Tibial artery (tissue), 4 donors: ENCODE measurements at regions of chr7 and their contacts with region 1.

Region 1: GRCh38 chr7:30740424-30741181 is 11.3 kb upstream of the INMT start:
- DNase-seq: peak; percentile 64 to 84
- H3K4me3 ChIP-seq: no peak overlapping the region
- H3K27ac ChIP-seq: no peak overlapping the region
- H3K4me1 ChIP-seq: peaks cover 0 to 8% (median 0%) of the 10 kb centered on the region in 4 donors
- H3K27me3 ChIP-seq: no peaks in the 10 kb centered on the region
- CTCF ChIP-seq: peak; percentile 93 to 99

Region 2: DNA sequence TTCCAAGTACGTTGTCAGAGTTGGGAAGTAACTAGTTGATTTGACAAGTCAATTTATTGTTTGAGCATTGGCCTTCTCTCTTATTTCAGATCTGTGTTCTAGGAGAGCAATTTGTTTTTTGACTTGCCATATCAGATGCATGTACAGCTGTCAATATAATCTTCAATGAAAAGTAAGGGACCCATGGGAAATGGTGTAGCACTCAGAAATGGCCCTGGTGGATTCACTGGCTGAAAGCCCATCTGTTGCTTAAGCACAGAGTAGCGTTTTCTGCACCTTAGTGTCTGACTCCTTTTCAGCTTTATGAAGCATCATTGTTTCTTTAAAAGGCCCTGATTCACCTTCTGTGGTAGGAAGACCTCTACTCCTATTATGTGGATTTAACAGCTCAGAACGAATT is 135.7 kb before region 1 on chr7:
- intact Hi-C with region 1: loop called (anchors 10 kb)
- DNase-seq: no peak
- H3K4me3 ChIP-seq: no peak overlapping the region
- H3K27ac ChIP-seq: no peak overlapping the region
- H3K4me1 ChIP-seq: no peaks in the 10 kb centered on the region
- H3K27me3 ChIP-seq: no peaks in the 10 kb centered on the region
- CTCF ChIP-seq: no peak

Region 3: GRCh38 chr7:30842542-30843451 is 102.2 kb after region 1 on chr7:
- intact Hi-C with region 1: no loop called
- DNase-seq: peak in 1 of 2 donors; percentile 68
- H3K4me3 ChIP-seq: no peak overlapping the region
- H3K27ac ChIP-seq: peak overlapping the region; percentile 83 to 93
- H3K4me1 ChIP-seq: peaks cover 13 to 53% (median 42%) of the 10 kb centered on the region in 4 donors
- H3K27me3 ChIP-seq: no peaks in the 10 kb centered on the region
- CTCF ChIP-seq: no peak

Region 4: GRCh38 chr7:30869794-30870611 is 129.4 kb after region 1 on chr7:
- intact Hi-C with region 1: no loop called
- DNase-seq: no peak
- H3K4me3 ChIP-seq: no peak overlapping the region
- H3K27ac ChIP-seq: peak overlapping the region in 1 of 2 donors; percentile 21
- H3K4me1 ChIP-seq: peaks cover 0 to 42% (median 11%) of the 10 kb centered on the region in 4 donors
- H3K27me3 ChIP-seq: no peaks in the 10 kb centered on the region
- CTCF ChIP-seq: no peak

Region 5: GRCh38 chr7:30983042-30983913 is 242.7 kb after region 1 on chr7:
- intact Hi-C with region 1: loop called (anchors 5 kb)
- DNase-seq: peak; percentile 77 to 88
- H3K4me3 ChIP-seq: peak overlapping the region; percentile 24 to 34
- H3K27ac ChIP-seq: peak overlapping the region in 1 of 2 donors; percentile 49
- H3K4me1 ChIP-seq: peaks cover 0 to 20% (median 9%) of the 10 kb centered on the region in 4 donors
- H3K27me3 ChIP-seq: peaks cover 0 to 16% of the 10 kb centered on the region in 2 donors
- CTCF ChIP-seq: peak; percentile 81 to 96